ENCODE measurements at regions of chr2 and their contacts with region 1.

Region 1: DNA sequence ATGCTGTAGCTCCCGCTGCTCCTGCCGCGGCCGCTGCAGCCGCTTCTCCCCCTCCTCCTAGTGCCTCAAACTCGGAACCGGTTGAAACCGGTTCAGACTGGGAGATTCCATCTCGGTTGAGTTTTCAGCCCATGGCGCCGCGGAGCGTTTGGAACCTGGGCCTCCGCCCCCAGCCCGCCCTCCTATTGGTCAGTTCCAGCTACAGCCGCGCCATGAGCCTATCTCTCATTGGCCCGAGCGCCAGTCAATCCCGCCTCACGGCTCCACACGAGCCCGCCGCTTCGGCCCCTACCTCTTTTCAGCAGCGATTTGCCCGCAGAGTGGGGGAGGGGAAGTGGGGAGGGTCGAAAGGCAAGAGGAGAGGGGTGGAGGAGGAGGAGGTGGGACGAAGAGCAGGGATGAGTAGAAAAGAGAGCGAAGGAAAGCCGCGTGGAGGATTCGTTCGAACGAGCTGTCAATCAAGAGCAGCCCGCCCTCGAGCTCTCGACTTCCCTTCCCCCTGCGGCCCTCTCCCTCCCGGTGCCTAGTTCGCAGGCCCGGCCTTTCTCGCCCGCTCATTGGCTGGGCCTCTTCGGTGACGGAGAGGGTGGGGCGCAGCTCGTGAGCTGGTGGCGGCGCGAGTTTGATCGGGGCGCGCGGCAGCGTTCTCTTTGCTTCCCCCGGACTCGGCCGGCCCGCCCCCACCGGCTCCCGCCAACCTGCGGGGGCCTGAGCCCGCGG is at the start of gene XPO1:
- DNase-seq: peak; percentile 99
- H3K4me3 Mint-ChIP-seq: peak within 1 kb of the TSS; percentile 86
- H3K27ac Mint-ChIP-seq: peak within 1 kb of the TSS; percentile 98
- H3K4me1 Mint-ChIP-seq: peaks cover 8% of the 10 kb centered on the region
- H3K27me3 Mint-ChIP-seq: no peaks in the 10 kb centered on the region
- CTCF ChIP-seq: no peak
- total RNA-seq, gene XPO1: 214 and 223 TPM in 2 replicates

Region 2: GRCh38 chr2:61633250-61633649 is 94.9 kb after region 1 on chr2:
- CTCF ChIA-PET with region 1: no interaction called
- intact Hi-C with region 1: loop called (anchors 5 kb)
- DNase-seq: no peak
- H3K4me3 Mint-ChIP-seq: no peak overlapping the region
- H3K27ac Mint-ChIP-seq: no peak overlapping the region
- H3K4me1 Mint-ChIP-seq: peaks cover 52% of the 10 kb centered on the region
- H3K27me3 Mint-ChIP-seq: no peaks in the 10 kb centered on the region
- CTCF ChIP-seq: no peak

Region 3: DNA sequence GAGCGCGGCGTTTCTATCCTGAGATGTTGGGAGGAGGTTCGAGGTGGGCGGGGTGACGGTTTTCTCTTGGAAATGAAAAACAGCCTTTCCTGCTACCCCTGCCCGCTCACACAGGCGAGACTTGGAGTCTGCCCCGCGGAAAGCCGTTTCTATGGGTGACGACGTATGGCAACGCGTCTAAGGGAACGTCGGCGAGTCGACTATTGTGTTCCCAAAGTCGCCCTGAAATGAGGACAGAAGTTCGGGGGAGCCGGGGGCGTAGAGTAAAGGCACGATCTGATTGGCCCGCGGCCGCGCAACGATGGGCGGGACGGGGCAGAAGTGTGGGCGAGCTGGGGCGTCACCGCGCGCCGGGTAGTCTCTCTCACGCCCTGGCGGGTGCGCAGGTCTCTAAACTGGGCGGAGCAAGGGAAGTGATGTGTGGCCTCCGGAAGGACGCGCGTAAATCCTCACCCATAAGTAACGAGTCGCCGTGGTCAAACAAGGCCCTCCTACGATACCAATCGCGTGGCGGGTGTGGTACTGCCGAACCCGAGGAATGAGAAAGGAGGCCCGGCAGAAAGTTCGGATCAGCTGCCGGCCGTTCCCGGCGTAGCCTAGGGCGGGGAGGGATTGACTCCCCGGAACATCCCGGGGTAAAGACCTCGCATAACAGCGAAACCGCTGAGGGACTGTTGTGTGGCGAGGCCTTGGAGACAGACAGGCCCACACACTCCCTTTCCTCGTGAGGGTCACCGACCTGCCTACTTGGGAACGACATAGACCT is 225.9 kb after region 1 on chr2:
- CTCF ChIA-PET with region 1: no interaction called
- intact Hi-C with region 1: loop called (anchors 2 kb)
- DNase-seq: peak; percentile 98
- H3K4me3 Mint-ChIP-seq: peak overlapping the region; percentile 93
- H3K27ac Mint-ChIP-seq: peak overlapping the region; percentile 99
- H3K4me1 Mint-ChIP-seq: peaks cover 12% of the 10 kb centered on the region
- H3K27me3 Mint-ChIP-seq: no peaks in the 10 kb centered on the region
- CTCF ChIP-seq: no peak

Region 4: DNA sequence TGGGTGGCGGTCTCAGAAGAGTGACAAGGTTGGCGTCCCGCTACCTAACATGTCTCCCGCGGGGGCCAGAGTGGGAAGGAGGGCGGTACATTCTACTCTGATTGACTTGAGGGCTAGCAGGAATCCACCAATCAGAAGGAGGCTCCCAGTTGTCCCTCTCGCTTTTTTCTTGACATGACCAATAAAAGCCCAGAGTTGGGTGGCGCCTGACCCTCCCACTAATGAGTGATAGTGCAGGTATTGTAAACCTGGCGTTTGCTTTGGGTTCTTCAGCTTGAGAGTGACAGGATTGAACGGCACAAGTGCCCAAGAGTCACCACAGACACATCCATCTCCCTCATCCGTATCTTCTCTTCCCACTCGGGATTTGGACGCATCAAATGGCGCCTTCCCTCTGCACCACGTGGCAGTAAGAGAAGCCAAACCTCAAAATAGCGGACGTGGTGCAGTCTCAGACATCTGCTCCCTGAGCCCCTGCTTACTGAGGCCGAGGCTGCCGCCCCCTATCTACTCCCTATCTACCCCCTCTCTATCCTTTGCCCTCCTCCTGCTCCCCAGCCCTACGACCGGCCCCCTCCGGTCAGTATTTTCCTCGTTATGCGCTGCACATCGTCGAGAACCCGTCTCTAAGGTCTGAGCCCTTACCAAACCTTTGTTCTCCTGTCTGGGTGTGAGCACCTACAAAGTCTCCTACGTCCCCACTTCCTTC is 316.3 kb after region 1 on chr2:
- CTCF ChIA-PET with region 1: no interaction called
- intact Hi-C with region 1: loop called (anchors 5 kb)
- DNase-seq: peak; percentile 92
- H3K4me3 Mint-ChIP-seq: peak overlapping the region; percentile 78
- H3K27ac Mint-ChIP-seq: peak overlapping the region; percentile 80
- H3K4me1 Mint-ChIP-seq: no peaks in the 10 kb centered on the region
- H3K27me3 Mint-ChIP-seq: no peaks in the 10 kb centered on the region
- CTCF ChIP-seq: peak; percentile 11